ENCODE measurements at regions of chr1 and their contacts with region 1.

Region 1: DNA sequence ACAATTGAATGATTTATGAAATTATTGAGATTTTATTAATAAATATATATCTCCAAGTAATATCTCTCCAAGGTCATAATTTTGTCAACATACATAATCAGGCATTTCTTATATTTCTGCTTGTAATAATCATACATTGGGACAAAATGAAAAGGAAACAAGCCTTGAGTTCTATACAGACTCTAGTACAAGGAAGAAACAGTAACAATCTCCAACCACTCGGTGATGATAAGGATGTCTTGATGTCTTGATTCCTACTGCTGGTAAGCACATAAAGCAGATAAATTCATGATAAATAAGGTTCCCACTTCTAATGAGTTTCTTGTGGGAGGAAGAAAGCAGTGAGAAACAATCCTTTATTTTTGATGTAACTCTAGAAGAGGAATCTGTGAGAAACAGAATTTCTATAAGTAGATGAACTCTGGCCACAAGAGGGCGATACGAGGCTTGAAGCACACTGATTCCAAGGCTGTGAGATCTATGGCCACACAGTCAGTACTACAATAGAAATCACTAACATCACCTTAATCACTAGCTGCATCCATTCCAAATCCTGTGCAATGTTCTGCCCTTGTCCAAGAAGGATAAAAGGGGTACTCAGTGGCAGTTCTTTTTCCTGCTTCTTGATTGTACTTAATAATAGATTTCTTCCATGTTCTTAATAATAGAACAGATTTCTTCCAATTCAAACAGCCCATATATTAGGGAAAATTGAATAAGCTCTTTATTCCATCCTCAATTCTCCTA is 41.4 kb upstream of the LRRC8B start:
- H3K4me3 ChIP-seq: no peak overlapping the region
- H3K27ac ChIP-seq: no peak overlapping the region
- H3K4me1 ChIP-seq: no peaks in the 10 kb centered on the region
- CTCF ChIP-seq: no peak; the same call in none of the 2 replicates

Region 2: GRCh38 chr1:88751714-88752113 is 731.5 kb before region 1 on chr1:
- CTCF ChIA-PET with region 1: no interaction called
- POLR2A ChIA-PET with region 1: no interaction called
- H3K4me3 ChIP-seq: no peak overlapping the region
- H3K27ac ChIP-seq: no peak overlapping the region
- H3K4me1 ChIP-seq: no peaks in the 10 kb centered on the region
- CTCF ChIP-seq: no peak

Region 3: GRCh38 chr1:89394851-89395250 is 88.3 kb before region 1 on chr1:
- CTCF ChIA-PET with region 1: no interaction called
- POLR2A ChIA-PET with region 1: no interaction called
- H3K4me3 ChIP-seq: no peak overlapping the region
- H3K27ac ChIP-seq: no peak overlapping the region
- H3K4me1 ChIP-seq: no peaks in the 10 kb centered on the region
- CTCF ChIP-seq: no peak

Region 4: GRCh38 chr1:89444791-89445190 is 38.4 kb before region 1 on chr1:
- CTCF ChIA-PET with region 1: no interaction called
- POLR2A ChIA-PET with region 1: no interaction called
- H3K4me3 ChIP-seq: no peak overlapping the region
- H3K27ac ChIP-seq: no peak overlapping the region
- H3K4me1 ChIP-seq: no peaks in the 10 kb centered on the region
- CTCF ChIP-seq: no peak

Region 5: GRCh38 chr1:89588480-89588879 is 105.3 kb after region 1 on chr1:
- CTCF ChIA-PET with region 1: no interaction called
- POLR2A ChIA-PET with region 1: no interaction called
- H3K4me3 ChIP-seq: no peak overlapping the region
- H3K27ac ChIP-seq: no peak overlapping the region
- H3K4me1 ChIP-seq: no peaks in the 10 kb centered on the region
- CTCF ChIP-seq: no peak

Region 6: DNA sequence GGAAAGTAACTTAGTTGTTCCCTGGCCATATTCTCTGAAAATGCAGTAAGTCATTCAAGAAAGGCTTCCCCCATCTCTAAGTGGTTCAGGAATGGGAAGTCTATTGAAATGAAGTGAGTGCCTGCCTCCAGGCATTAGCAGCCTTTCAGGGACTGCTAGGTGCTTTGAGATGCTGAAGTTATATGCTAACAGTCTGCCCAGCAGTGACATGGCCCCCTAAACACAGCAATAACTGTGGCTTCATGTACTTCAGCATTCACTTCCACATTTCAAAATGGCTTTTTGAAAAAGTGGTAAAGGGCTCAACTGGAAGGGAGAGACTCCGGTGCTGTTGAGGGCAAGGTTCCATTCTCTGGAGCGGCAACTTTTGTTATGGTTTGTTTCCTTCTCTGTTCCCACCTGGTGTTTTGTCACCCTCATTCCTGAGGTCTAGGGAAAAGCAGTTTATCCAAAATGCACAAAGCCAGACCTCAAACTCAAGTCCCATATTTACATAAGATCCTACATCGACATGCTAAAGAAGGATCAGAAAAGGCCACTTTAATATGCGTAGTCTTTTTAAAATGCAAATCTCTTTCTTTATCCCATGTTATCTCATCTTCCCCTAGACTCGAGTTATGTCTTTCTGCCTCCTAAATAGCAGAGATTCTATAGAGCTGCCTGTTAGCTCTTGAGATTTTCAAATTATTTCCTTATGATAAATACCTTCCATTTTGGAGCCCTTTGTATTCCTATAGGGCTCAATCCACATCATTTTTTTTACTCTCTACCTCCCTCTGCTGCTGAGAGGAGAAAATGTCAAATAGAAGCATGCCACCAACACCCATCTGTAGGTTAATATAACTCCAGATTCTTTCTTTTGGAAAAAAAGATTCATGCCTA is 115.5 kb after region 1 on chr1:
- CTCF ChIA-PET with region 1: interaction called, 14 read pairs
- POLR2A ChIA-PET with region 1: no interaction called
- H3K4me3 ChIP-seq: no peak overlapping the region
- H3K27ac ChIP-seq: no peak overlapping the region
- H3K4me1 ChIP-seq: no peaks in the 10 kb centered on the region
- CTCF ChIP-seq: no peak

Region 7: DNA sequence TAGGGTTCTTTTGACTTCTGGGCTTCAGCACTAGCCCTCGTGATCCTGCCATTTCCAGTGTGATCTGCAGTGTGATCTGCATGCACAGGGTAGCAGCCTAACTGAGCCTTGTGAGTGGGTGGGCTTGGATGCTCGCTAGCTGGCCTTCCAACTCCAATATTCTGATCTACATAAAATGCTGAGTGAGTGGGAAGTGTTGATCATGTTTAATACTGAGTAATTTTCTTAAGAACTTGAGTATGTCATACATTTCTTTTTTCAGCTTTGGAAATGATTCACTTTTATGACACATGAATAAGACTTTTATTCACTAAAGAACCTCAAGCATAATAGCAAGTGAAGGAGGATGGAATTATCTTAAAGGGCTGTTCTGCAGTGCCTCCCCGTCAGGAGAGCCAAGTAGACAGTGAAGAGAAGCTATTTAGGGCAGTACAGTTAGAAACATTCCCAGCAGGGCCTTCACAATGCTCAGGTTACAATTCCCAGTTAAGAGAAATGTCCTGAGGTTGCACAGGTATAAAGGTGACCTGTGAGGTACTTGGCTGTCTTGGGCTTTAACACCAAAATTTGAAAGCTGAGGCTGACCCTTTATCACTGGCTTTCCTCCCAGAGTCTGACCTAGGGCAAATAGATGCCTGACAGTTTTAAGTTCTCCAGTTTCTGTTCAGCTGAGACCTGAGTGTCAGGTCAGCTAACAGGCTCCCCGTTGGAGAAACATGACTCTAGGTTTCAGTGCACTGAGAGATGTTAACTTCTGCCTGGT is 120.6 kb after region 1 on chr1:
- CTCF ChIA-PET with region 1: interaction called, 14 read pairs
- POLR2A ChIA-PET with region 1: no interaction called
- H3K4me3 ChIP-seq: no peak overlapping the region
- H3K27ac ChIP-seq: no peak overlapping the region
- H3K4me1 ChIP-seq: no peaks in the 10 kb centered on the region
- CTCF ChIP-seq: no peak

Measured in HEK293 (cell line).